ENCODE measurements at regions of chr9 and their contacts with region 1.

Region 1: GRCh38 chr9:19085295-19085694 is 17.4 kb downstream of the HAUS6 start:
- DNase-seq: no peak
- H3K4me3 ChIP-seq: no peak overlapping the region
- H3K27ac ChIP-seq: no peak overlapping the region
- H3K4me1 ChIP-seq: no peaks in the 10 kb centered on the region
- H3K27me3 ChIP-seq: no peaks in the 10 kb centered on the region
- CTCF ChIP-seq: peak in 2 of 3 experiments; percentile 32 to 54; a peak in 3 of 4 replicates
- EP300 ChIP-seq: no peak
- POLR2A ChIP-seq: no peak
- RAD21 ChIP-seq: peak; percentile 41 to 51

Region 2: GRCh38 chr9:19022206-19022605 is 63.1 kb before region 1 on chr9:
- CTCF ChIA-PET with region 1: no interaction called
- POLR2A ChIA-PET with region 1: no interaction called
- DNase-seq: no peak
- H3K4me3 ChIP-seq: no peak overlapping the region
- H3K27ac ChIP-seq: no peak overlapping the region
- H3K4me1 ChIP-seq: no peaks in the 10 kb centered on the region
- H3K27me3 ChIP-seq: no peaks in the 10 kb centered on the region
- CTCF ChIP-seq: no peak
- EP300 ChIP-seq: no peak
- POLR2A ChIP-seq: no peak
- RAD21 ChIP-seq: no peak

Region 3: DNA sequence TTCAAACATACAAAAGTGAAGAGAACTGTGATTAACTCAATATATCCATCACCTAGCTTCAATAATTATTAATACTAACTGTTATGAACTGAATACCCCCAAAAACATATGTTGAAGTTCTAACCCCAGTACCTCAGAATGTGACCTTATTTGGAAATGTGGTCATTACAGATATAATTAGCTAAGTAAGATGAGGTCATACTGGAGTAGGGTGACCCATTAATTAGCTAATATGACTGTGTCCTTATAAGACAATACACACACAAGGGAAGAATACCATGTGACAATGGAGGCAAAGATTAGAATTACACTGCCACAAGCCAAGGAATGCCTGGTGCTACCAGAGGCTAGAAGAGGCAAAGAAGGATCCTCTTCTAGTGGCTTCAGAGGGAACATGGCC is 28.3 kb before region 1 on chr9:
- CTCF ChIA-PET with region 1: interaction called, 13 read pairs
- POLR2A ChIA-PET with region 1: interaction called, 6 read pairs
- DNase-seq: no peak
- H3K4me3 ChIP-seq: no peak overlapping the region
- H3K27ac ChIP-seq: no peak overlapping the region
- H3K4me1 ChIP-seq: no peaks in the 10 kb centered on the region
- H3K27me3 ChIP-seq: no peaks in the 10 kb centered on the region
- CTCF ChIP-seq: no peak
- EP300 ChIP-seq: no peak
- POLR2A ChIP-seq: no peak
- RAD21 ChIP-seq: no peak

Region 4: GRCh38 chr9:19074836-19075235 is 10.5 kb before region 1 on chr9:
- CTCF ChIA-PET with region 1: interaction called, 20 read pairs
- POLR2A ChIA-PET with region 1: interaction called, 3 read pairs
- DNase-seq: no peak
- H3K4me3 ChIP-seq: no peak overlapping the region
- H3K27ac ChIP-seq: no peak overlapping the region
- H3K4me1 ChIP-seq: no peaks in the 10 kb centered on the region
- H3K27me3 ChIP-seq: no peaks in the 10 kb centered on the region
- CTCF ChIP-seq: no peak
- EP300 ChIP-seq: no peak
- POLR2A ChIP-seq: no peak
- RAD21 ChIP-seq: no peak

Region 5: DNA sequence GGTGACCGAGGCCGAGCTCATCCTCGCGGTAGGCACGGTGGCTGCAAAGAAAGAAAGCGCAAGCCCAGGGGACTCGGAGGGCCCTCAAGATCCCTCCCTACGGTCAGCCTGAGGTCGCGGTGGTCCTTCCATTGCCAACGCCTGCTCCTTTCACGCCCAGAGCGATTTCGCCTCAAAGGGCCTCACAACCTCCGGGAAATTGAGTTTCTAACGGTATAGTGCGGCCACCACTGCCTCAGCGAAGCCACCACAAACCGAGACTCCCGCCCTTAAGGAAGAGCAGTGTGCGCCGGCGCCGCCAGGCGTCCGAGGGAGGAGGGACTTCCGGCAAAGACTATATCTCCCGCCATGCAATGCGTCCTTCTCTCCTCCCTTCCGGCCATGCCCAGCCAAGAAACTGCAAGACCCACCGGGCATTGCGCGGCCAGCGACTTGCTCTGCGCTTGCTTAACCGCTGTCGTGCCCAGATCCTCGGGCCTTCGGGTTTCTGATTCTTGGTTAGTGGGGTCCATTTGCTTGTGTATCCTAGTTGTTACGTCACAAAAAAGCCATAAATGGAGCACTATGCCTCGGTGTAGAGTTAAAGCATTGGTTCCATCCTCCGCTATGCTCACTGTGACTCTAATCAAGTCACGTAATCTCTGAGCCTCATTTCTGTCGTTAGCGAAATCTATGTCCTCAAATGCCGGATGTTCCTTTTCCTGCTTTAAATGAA is 17.5 kb after region 1 on chr9 and contains the start of gene HAUS6:
- CTCF ChIA-PET with region 1: interaction called, 14 read pairs
- POLR2A ChIA-PET with region 1: interaction called, 13 read pairs
- DNase-seq: peak; percentile 88 to 91
- H3K4me3 ChIP-seq: peak within 1 kb of the TSS; percentile 92 to 100 (median 94)
- H3K27ac ChIP-seq: peak within 1 kb of the TSS; percentile 70
- H3K4me1 ChIP-seq: peaks cover 0 to 3% (median 0%) of the 10 kb centered on the region in 4 experiments; a peak in 3 of 7 replicates
- H3K27me3 ChIP-seq: no peaks in the 10 kb centered on the region
- CTCF ChIP-seq: peak; percentile 19 to 61 (median 35)
- EP300 ChIP-seq: no peak
- POLR2A ChIP-seq: peak; percentile 63 to 95
- RAD21 ChIP-seq: no peak
- total RNA-seq, gene HAUS6: 52.4 and 53.4 TPM in 2 replicates

Region 6: DNA sequence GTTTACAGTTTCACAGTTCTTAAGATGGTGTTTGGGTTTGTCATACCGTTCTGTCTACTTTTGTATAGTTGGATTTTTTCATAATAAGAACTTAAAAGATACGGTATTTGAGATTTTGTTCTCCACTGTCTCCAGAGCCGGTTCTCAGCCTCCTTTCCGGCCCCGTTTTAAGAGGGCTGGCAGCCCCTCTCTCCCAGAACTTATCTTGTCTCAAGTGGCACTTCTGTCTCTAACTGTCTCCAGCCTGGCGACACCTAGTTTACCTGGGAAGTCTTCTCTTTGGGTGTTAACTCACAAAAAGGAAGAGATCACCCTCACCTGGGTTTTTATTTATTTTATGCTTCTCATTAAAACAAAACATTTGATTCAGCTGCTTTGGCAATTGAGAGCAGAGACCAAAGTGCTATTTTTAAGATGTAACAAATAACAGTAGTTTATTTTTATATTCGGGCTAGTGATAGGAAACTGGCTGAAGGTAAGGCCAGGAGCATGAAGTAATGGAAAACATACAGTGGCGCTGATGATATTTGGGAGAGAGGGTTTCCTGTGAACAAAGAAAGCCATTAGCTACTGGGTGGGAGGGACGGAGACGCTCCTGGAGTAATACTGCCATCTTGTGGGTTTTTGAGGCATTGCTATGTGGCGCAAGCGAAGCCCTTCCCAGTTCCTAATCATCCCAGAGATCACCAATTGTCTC is 371.8 kb after region 1 on chr9:
- CTCF ChIA-PET with region 1: interaction called, 16 read pairs
- POLR2A ChIA-PET with region 1: no interaction called
- DNase-seq: peak; percentile 65 to 87
- H3K4me3 ChIP-seq: no peak overlapping the region; a peak in 1 of 8 replicates
- H3K27ac ChIP-seq: no peak overlapping the region
- H3K4me1 ChIP-seq: peaks cover 0 to 7% (median 5%) of the 10 kb centered on the region in 4 experiments; a peak in 2 of 7 replicates
- H3K27me3 ChIP-seq: no peaks in the 10 kb centered on the region
- CTCF ChIP-seq: peak; percentile 74 to 98 (median 85)
- EP300 ChIP-seq: no peak; a peak in 1 of 3 replicates
- POLR2A ChIP-seq: no peak
- RAD21 ChIP-seq: peak; percentile 99 to 100